Right ventricle myocardium superior (tissue), 1 donor: ENCODE measurements at regions of chr2 and their contacts with region 1.

Region 1: GRCh38 chr2:98385050-98385699 is 38.9 kb downstream of the CNGA3 start:
- DNase-seq: peak; percentile 82
- ATAC-seq: peak; percentile 94

Region 2: DNA sequence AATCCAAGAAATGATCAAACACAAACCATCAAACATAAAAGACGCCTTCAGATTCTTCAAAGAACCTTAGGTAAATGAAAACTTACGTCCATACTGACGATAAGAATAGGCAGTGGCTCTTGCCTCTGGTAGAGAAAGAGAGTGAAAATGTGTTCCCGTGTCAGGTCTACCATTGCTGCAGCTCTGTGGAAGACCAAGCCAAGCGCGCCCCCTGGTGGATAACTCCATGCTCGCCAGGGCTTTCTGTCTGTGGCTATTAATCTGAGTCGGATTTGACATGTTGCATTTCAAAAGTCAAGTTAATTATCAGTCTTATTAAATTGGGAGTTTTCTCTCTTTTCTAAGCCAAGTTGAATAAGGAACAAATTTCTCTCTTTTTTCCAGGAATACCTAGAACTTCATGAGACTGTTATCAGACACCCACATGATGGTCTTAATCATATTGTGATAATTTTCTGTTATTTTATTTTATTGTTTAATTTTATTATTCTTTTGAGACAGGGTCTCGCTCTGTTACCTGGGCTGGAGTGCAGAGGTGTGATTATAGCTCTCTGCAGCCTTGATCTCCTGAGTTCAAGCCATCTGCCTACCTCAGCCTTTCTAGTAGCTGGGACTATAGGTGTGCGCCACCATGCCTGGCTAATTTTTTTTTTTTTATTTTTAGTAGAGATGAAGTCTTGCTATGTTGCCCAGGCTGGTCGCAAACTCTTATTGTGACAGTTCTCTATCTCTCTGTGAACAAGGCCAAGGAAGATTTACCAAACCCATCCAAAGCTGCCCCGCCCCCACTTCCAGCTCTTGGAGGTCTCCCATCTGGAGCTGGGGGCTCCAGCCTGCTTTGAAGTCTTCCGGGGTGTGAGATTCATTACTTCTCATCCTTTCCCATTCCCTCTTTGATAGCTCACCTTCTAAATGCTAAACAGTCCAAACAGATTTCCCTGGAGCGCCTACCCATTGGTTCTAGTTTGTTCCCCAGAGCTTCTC is 687.6 kb before region 1 on chr2:
- intact Hi-C with region 1: loop called (anchors 10 kb)
- DNase-seq: peak; percentile 95
- ATAC-seq: peak; percentile 97

Region 3: DNA sequence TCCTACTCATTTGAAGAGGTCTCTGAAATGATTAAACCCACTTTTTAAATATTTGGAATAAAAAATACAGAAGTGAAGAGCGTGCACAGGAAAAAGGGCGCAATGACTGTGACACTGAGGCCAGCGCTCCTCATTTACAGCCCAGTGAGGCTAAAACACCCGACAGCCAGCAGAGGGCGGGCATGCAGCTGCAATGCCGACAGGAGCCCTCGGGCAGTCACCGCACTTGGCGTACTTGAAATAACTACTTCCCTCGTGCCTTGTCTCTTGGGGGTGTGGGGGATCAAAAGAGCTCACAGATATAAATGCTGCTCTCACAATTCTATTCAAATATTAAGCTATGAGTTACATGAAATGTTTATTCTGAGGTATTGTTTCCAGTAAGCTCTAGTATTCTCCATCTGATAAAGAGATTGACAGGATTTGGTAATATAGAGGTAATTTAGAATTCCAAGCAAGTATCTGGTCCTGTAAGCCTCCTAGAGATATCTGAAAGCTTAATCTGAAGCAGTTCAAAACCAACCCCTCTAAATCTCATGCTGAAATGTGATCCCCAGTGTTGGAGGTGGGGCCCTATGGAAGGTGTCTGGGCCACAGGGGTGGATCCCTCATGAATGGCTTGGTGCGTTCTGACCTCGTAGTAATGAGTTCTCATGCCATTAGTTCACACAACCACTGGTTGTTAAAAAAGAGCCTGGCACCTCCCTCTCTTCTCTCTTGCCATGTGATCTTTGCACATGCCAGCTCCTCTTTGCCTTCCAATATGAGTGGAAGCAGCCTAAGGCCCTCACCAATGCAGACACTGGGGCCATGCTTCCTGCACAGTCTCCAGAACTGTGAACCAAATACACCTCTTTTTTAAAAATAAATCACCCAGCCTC is 578.2 kb before region 1 on chr2:
- intact Hi-C with region 1: loop called (anchors 5 kb)
- DNase-seq: peak; percentile 91
- ATAC-seq: peak; percentile 99

Region 4: GRCh38 chr2:98346311-98347236 is 38.6 kb before region 1 on chr2 and contains the start of gene CNGA3:
- intact Hi-C with region 1: no loop called
- DNase-seq: peak; percentile 45
- ATAC-seq: peak; percentile 53
- total RNA-seq, gene CNGA3: not detected